ENCODE measurements at regions of chr7 and their contacts with region 1.

Region 1: GRCh38 chr7:2241580-2242540 is at the starts of genes MRM2 and NUDT1:
- H3K4me3 ChIP-seq: peak within 1 kb of the TSS; percentile 99
- H3K27ac ChIP-seq: peak within 1 kb of the TSS; percentile 77
- H3K4me1 ChIP-seq: peaks cover 8% of the 10 kb centered on the region; the same call in 1 of the 2 replicates
- CTCF ChIP-seq: no peak; the same call in 1 of the 2 replicates

Region 2: DNA sequence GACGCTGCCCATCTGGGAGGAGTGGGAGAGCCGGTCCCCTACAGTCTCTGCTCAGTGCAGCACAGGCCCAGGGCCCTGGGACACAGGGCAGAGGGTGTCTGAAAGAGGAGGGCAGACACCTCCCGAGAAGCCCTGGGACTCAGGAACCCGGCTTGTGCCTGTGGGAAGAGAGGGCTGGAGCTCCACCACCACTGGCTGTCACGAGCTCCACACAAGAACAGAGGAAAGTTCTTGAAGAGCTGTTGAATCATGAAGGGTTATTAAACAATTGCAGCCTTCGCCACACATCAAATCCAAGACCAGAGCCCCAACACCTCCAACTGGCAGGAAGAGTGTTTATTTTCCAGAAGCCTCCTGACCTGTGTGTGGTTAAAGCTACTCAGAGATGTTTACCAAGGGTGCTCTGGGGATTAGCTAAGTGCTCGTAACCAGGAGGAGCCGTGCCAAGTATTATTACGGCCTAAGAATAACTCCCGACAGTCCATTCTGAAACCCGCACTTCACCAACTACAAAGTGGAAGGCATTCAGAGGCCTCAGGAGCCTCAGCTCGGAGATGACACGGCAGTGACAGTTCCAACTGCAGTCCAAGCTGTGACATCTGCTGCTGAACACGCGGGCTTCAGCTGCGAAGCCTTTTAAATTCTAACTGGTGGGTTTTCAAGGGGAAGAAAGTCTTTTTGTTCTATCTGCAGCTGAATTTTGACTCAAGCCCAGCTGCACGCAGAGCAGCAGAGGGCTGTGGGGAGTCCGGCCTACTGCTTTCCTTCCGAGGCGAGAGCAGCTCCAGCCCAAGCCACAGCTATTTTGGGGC is 84.2 kb before region 1 on chr7:
- CTCF ChIA-PET with region 1: no interaction called
- POLR2A ChIA-PET with region 1: no interaction called
- H3K4me3 ChIP-seq: no peak overlapping the region
- H3K27ac ChIP-seq: peak overlapping the region; percentile 94
- H3K4me1 ChIP-seq: peaks cover 25% of the 10 kb centered on the region
- CTCF ChIP-seq: no peak

Region 3: DNA sequence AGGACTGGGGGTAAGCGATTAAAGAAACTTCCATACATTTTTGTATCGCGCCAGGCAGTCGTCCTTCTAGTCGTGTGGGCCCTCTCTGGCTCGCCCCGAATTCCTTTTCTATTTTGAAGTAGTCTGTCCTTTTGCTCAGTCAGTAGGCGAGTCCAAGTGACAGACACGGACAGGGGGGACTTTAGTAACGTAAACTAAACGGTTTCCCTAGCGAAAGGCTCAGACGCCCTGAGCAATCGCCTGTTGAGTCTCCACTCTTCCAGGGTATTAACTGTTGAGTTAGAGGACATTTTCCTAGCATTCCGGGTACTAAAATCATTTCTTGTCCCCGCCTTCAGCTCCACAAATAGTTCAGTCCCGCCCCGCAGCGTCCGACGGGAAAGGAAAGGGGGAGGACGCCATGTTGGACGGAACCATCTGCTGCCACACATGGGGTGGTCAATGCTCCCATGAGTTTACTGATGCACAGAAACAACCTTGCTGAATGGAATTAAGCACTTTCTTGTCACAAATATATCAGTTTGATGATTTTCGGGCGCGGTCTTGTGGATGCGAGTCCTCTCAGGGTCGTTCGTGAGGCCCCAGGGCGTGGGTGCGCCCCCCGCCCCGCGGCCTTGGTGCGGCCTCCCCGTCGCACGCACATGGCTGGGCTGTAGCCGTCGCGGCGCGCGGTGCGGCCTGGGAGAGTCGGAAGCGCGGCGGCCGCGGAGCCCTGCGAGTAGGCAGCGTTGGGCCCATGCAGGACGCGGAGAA is 112.5 kb after region 1 on chr7 and contains the start of gene EIF3B:
- CTCF ChIA-PET with region 1: interaction called, 3 read pairs
- POLR2A ChIA-PET with region 1: interaction called, 14 read pairs
- H3K4me3 ChIP-seq: peak within 1 kb of the TSS; percentile 90
- H3K27ac ChIP-seq: peak within 1 kb of the TSS; percentile 98
- H3K4me1 ChIP-seq: peaks cover 9% of the 10 kb centered on the region
- CTCF ChIP-seq: no peak

Measured in HEK293 (cell line).